ENCODE measurements at regions of chr5 and their contacts with region 1.

Region 1: DNA sequence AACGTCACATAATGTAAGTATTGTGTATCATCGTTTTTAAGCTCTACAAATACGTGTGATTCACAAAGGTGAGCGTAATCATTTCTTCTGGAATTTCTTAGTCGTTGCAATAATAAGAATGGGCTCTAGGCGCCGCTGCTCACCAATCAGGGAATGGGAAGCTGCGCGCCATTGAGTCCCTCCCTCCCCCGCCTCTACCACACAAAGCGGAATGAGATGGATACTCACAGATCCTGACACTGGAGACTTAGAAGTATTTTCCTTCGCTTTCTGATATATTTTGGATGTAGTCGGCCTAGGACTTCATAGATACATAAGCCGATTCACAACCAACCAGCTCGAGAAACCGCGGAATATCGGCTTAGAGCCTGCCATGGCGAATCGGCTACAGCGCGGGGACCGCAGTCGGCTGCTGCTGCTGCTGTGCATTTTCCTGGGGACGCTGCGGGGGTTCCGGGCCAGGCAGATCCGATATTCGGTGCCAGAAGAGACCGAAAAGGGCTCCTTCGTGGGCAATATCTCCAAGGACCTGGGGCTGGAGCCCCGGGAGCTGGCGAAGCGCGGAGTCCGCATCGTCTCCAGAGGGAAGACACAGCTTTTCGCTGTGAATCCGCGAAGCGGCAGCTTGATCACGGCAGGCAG is at the start of gene PCDHGA11:
- DNase-seq: peak in 1 of 2 donors; percentile 47
- ATAC-seq: peak; percentile 54 to 63
- H3K4me3 ChIP-seq: peak within 1 kb of the TSS; percentile 48 to 56 (median 53)
- H3K27ac ChIP-seq: peak within 1 kb of the TSS; percentile 23 to 55 (median 36)
- H3K4me1 ChIP-seq: peaks cover 12 to 44% of the 10 kb centered on the region in 2 donors
- H3K27me3 ChIP-seq: peaks cover 0 to 10% (median 0%) of the 10 kb centered on the region in 3 donors
- CTCF ChIP-seq: peak; percentile 49 to 71 (median 57)
- POLR2A ChIP-seq: no peak
- total RNA-seq, gene PCDHGA11: 1.2 to 3.3 (median 1.3) TPM

Region 2: GRCh38 chr5:141223112-141223783 is 197.7 kb before region 1 on chr5 and contains the start of gene PCDHB14:
- in situ Hi-C with region 1: no loop called
- intact Hi-C with region 1: no loop called
- DNase-seq: no peak
- ATAC-seq: peak in 1 of 2 donors; percentile 61
- H3K4me3 ChIP-seq: peak within 1 kb of the TSS; percentile 3 to 47 (median 28)
- H3K27ac ChIP-seq: no peak within 1 kb of the TSS
- H3K4me1 ChIP-seq: no peaks in the 10 kb centered on the region
- H3K27me3 ChIP-seq: peaks cover 0 to 17% (median 0%) of the 10 kb centered on the region in 3 donors
- CTCF ChIP-seq: peak in 1 of 5 experiments; percentile 29
- POLR2A ChIP-seq: no peak
- total RNA-seq, gene PCDHB14: 0.62 to 1.9 (median 0.76) TPM

Region 3: DNA sequence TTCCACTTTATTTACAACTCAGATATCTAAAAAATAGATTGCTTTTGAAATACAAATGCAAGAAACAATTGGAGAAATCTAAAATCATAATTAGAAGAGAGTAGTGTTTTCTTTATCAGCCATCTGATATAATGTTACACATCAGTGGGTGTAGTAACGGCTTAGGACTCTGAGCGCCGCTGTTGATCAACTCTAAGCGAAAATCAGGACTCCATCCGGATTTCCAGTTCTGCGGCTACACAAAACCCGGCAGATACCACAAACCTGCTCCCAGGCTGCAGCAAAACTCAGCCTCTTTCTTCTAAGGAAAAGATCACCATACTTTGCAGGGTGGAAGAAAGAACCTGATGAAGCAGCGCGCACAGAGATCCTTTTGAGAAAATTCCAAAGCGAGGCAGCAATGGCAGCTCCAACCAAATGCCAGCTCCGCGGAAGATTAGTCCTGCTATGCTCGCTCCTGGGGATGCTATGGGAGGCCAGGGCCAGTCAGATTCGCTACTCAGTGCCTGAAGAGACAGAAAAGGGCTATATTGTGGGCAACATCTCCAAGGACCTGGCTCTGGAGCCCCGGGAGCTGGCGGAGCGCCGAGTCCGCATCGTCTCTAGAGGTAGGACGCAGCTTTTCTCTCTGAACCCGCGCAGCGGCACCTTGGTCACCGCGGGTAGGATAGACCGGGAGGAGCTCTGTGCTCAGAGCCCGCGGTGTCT is 18.3 kb before region 1 on chr5 and contains the start of gene PCDHGA9:
- in situ Hi-C with region 1: no loop called
- intact Hi-C with region 1: loop called (anchors 1 kb)
- DNase-seq: no peak
- ATAC-seq: peak; percentile 55 to 63
- H3K4me3 ChIP-seq: peak within 1 kb of the TSS; percentile 29 to 45 (median 37)
- H3K27ac ChIP-seq: no peak within 1 kb of the TSS
- H3K4me1 ChIP-seq: peaks cover 14 to 15% of the 10 kb centered on the region in 2 donors
- H3K27me3 ChIP-seq: peaks cover 0 to 4% (median 0%) of the 10 kb centered on the region in 3 donors
- CTCF ChIP-seq: peak in 4 of 5 experiments; percentile 35 to 46 (median 40)
- POLR2A ChIP-seq: no peak
- total RNA-seq, gene PCDHGA9: 0.95 to 4.0 (median 1.5) TPM

Region 4: GRCh38 chr5:141465351-141465750 is 44.4 kb after region 1 on chr5:
- in situ Hi-C with region 1: loop called in 1 of 4 experiments (anchors 5 kb)
- intact Hi-C with region 1: no loop called
- DNase-seq: no peak
- ATAC-seq: no peak
- H3K4me3 ChIP-seq: no peak overlapping the region
- H3K27ac ChIP-seq: no peak overlapping the region
- H3K4me1 ChIP-seq: no peaks in the 10 kb centered on the region
- H3K27me3 ChIP-seq: no peaks in the 10 kb centered on the region
- CTCF ChIP-seq: no peak
- POLR2A ChIP-seq: no peak

Region 5: DNA sequence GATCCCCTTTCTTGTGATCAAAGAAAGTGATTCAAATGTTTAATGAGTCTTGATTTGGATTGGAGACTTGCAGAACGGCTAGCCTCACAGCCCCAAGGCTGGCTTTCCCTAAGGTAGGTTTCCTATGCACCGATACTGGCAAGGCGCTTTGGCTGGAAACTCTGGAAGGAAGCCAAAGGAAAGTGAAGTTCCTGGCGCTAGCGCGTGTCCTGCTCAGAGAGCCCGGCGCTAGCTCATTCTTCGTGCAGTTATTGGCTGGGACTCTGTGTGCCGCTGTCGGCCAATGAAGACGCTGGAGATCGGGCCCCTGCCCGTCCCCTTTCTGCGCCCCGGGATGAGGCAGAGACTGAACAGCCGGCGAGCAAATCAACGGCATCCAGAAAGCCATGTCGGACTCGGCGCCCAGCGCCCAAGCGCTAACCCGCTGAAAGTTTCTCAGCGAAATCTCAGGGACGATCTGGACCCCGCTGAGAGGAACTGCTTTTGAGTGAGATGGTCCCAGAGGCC is 54.7 kb after region 1 on chr5 and contains the start of gene PCDHGC3:
- in situ Hi-C with region 1: loop called in 1 of 4 experiments (anchors 5 kb)
- intact Hi-C with region 1: no loop called
- DNase-seq: peak; percentile 92 to 95
- ATAC-seq: peak; percentile 95
- H3K4me3 ChIP-seq: peak within 1 kb of the TSS; percentile 69 to 83 (median 75)
- H3K27ac ChIP-seq: peak within 1 kb of the TSS; percentile 82 to 91 (median 88)
- H3K4me1 ChIP-seq: peaks cover 48 to 53% of the 10 kb centered on the region in 2 donors
- H3K27me3 ChIP-seq: no peaks in the 10 kb centered on the region
- CTCF ChIP-seq: peak in 4 of 5 experiments; percentile 36 to 63 (median 58)
- POLR2A ChIP-seq: peak; percentile 35 to 67
- total RNA-seq, gene PCDHGC3: 11.8 to 14.5 (median 13.8) TPM

Region 6: GRCh38 chr5:142246258-142246657 is 825.3 kb after region 1 on chr5:
- in situ Hi-C with region 1: no loop called
- intact Hi-C with region 1: no loop called
- DNase-seq: peak in 1 of 2 donors; percentile 16
- ATAC-seq: peak; percentile 16 to 44
- H3K4me3 ChIP-seq: no peak overlapping the region
- H3K27ac ChIP-seq: no peak overlapping the region
- H3K4me1 ChIP-seq: no peaks in the 10 kb centered on the region
- H3K27me3 ChIP-seq: no peaks in the 10 kb centered on the region
- CTCF ChIP-seq: no peak
- POLR2A ChIP-seq: no peak

Measured in gastrocnemius medialis (tissue), 4 donors.